Mammary epithelial cell (primary cell): ENCODE measurements at regions of chr6 and their contacts with region 1.

Region 1: DNA sequence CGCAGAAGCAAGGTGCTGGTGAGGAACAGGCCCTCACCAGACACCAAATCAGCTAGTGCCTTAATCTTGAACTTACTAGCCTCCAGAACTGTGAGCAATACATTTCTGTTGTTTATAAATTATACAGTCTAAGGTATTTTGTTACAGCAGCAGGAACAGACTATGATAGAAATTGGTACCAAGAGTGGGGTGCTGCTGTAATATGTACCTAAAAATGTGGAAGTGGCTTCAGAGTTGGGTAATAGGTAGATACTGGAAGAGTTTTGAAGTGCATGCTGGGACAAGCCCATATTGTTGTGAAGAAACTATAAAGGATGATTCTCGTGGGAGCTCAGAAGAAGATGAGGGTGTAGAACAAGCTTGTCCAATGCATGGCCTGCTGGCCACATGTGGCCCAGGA is 866.8 kb downstream of the C6orf118 start:
- DNase-seq: no peak
- H3K4me3 ChIP-seq: no peak overlapping the region
- H3K27ac ChIP-seq: no peak overlapping the region
- H3K4me1 ChIP-seq: no peaks in the 10 kb centered on the region
- H3K27me3 ChIP-seq: no peaks in the 10 kb centered on the region
- CTCF ChIP-seq: no peak

Region 2: GRCh38 chr6:164967102-164967501 is 524.5 kb after region 1 on chr6:
- CTCF ChIA-PET with region 1: no interaction called
- dilution Hi-C with region 1: no loop called
- in situ Hi-C with region 1: no loop called
- intact Hi-C with region 1: no loop called
- DNase-seq: no peak
- H3K4me3 ChIP-seq: no peak overlapping the region
- H3K27ac ChIP-seq: no peak overlapping the region
- H3K4me1 ChIP-seq: no peaks in the 10 kb centered on the region
- H3K27me3 ChIP-seq: no peaks in the 10 kb centered on the region
- CTCF ChIP-seq: no peak

Region 3: DNA sequence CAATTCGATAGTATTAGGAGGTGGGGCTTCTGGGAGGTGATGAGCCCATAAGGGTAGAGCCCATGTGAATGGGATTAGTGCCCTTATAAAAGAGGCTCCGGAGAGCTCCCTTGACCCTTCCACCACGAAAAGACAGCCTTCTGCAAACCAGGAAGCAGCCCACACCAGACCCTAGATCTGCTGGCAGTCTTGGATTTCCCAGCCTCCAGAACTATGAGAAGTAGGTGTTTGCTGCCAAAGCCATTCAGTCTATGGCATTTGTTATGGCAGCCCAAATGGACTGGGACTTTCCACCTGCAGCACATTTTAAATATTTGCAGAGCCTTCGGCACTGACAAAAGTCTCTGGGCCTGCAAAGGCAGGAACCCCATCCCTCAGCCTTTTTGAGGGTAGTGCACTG is 1911.6 kb after region 1 on chr6:
- CTCF ChIA-PET with region 1: interaction called, 12 read pairs
- dilution Hi-C with region 1: no loop called
- in situ Hi-C with region 1: no loop called
- intact Hi-C with region 1: no loop called
- DNase-seq: no peak
- H3K4me3 ChIP-seq: no peak overlapping the region
- H3K27ac ChIP-seq: no peak overlapping the region
- H3K4me1 ChIP-seq: peaks cover 7% of the 10 kb centered on the region
- H3K27me3 ChIP-seq: no peaks in the 10 kb centered on the region
- CTCF ChIP-seq: no peak